ENCODE measurements at regions of chr19 and their contacts with region 1.

Region 1: GRCh38 chr19:36665832-36666231 is 805 bp downstream of the ZNF461 start:
- DNase-seq: peak in 1 of 9 experiments; percentile 8
- ATAC-seq: no peak
- H3K4me3 ChIP-seq: peak overlapping the region; percentile 62 to 63
- H3K4me3 Mint-ChIP-seq: peak overlapping the region; percentile 98
- H3K27ac ChIP-seq: peak overlapping the region; percentile 59 to 72
- H3K27ac Mint-ChIP-seq: peak overlapping the region; percentile 73
- H3K4me1 ChIP-seq: peaks cover 8% of the 10 kb centered on the region
- H3K4me1 Mint-ChIP-seq: peaks cover 35% of the 10 kb centered on the region
- H3K27me3 ChIP-seq: no peaks in the 10 kb centered on the region
- H3K27me3 Mint-ChIP-seq: no peaks in the 10 kb centered on the region
- CTCF ChIP-seq: no peak

Region 2: DNA sequence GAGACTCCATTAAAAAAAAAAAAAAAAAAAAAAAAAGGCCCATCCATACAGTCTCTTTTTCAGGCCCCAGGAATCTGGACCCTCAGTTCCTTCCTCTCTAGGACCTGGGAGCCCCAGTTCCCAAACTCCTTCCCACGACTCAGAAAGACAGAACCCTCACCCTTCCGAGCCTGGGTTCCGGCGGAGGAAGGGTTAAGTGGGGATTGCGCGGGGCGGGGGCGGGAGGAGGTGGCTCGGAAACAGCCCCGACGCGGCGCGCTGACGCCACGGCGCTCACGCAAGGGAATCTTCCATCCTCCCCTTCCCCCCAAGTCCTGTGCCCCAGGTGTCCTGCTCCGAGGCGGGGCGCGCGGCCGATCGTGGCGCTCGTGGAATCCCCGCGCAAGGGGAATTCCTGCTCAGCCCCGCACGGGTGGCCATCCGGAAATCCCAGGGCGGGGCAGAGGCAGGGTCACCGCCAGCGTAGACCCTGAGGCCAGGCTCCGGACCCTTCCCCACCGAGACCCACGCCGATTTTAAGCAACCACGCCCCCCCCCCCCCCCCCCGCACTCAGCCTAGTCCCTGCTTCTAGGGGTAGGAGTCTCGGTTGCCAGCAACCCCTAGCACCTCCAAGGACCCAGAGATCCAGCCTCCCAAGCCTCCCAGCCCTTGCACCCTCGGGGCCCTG is 766.2 kb before region 1 on chr19:
- CTCF ChIA-PET with region 1: no interaction called
- POLR2A ChIA-PET with region 1: no interaction called
- intact Hi-C with region 1: loop called in 1 of 2 experiments (anchors 5 kb)
- DNase-seq: peak; percentile 68 to 97 (median 87)
- ATAC-seq: peak; percentile 59
- H3K4me3 ChIP-seq: peak overlapping the region; percentile 95 to 97
- H3K4me3 Mint-ChIP-seq: peak overlapping the region; percentile 100
- H3K27ac ChIP-seq: peak overlapping the region; percentile 85 to 99
- H3K27ac Mint-ChIP-seq: peak overlapping the region; percentile 95
- H3K4me1 ChIP-seq: peaks cover 45% of the 10 kb centered on the region
- H3K4me1 Mint-ChIP-seq: peaks cover 57% of the 10 kb centered on the region
- H3K27me3 ChIP-seq: no peaks in the 10 kb centered on the region
- H3K27me3 Mint-ChIP-seq: no peaks in the 10 kb centered on the region
- CTCF ChIP-seq: no peak

Region 3: DNA sequence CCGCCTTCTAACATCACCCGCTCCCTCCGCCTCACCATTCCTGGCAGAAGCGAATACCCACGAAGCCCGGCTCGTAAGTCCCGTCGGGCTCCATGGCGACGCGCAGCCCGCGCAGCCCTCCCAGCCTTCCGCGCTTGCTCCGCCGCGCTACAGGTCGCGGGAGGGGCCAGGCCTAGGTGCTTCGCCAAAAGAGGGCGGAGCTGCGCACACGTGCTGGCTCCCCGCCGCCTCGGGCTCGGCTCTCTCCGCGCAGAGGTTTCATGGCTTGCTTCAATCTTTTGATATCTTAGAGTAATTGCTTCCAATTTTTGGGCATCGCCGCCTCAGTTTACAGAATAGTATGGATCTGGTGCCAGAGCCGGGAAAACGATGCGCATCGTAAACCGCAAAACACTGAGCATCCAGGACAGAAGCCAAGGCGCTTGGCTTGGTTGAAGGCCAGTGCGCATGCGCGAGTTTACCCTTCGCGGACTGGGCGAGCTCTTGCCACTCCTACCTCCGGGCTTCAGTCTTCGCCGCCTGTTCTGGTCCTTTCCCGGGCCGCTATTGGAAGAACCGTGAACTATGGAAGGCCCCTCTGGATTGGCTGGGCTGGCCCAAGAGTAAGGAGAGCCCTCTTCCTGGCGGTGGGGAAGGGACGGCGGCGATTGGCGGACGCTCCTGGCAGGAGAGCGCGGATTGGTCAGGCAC is 550.9 kb before region 1 on chr19 and contains the start of gene POLR2I:
- CTCF ChIA-PET with region 1: no interaction called
- POLR2A ChIA-PET with region 1: no interaction called
- intact Hi-C with region 1: no loop called
- DNase-seq: peak; percentile 96 to 100 (median 99)
- ATAC-seq: peak; percentile 85
- H3K4me3 ChIP-seq: peak within 1 kb of the TSS; percentile 71 to 73
- H3K4me3 Mint-ChIP-seq: peak within 1 kb of the TSS; percentile 92
- H3K27ac ChIP-seq: peak within 1 kb of the TSS; percentile 77 to 92
- H3K27ac Mint-ChIP-seq: peak within 1 kb of the TSS; percentile 97
- H3K4me1 ChIP-seq: peaks cover 18% of the 10 kb centered on the region
- H3K4me1 Mint-ChIP-seq: peaks cover 39% of the 10 kb centered on the region
- H3K27me3 ChIP-seq: no peaks in the 10 kb centered on the region
- H3K27me3 Mint-ChIP-seq: no peaks in the 10 kb centered on the region
- CTCF ChIP-seq: no peak
- total RNA-seq, gene POLR2I: 27.4 to 34.7 TPM

Region 4: GRCh38 chr19:36573020-36573885 is 92.6 kb before region 1 on chr19 and contains the start of gene ZNF529:
- CTCF ChIA-PET with region 1: no interaction called
- POLR2A ChIA-PET with region 1: no interaction called
- intact Hi-C with region 1: loop called (anchors 1 to 10 kb)
- DNase-seq: peak; percentile 75 to 98 (median 85)
- ATAC-seq: peak; percentile 93
- H3K4me3 ChIP-seq: peak within 1 kb of the TSS; percentile 87 to 99
- H3K4me3 Mint-ChIP-seq: peak within 1 kb of the TSS; percentile 87
- H3K27ac ChIP-seq: peak within 1 kb of the TSS; percentile 96 to 98
- H3K27ac Mint-ChIP-seq: peak within 1 kb of the TSS; percentile 99
- H3K4me1 ChIP-seq: peaks cover 19% of the 10 kb centered on the region
- H3K4me1 Mint-ChIP-seq: peaks cover 45% of the 10 kb centered on the region
- H3K27me3 ChIP-seq: no peaks in the 10 kb centered on the region
- H3K27me3 Mint-ChIP-seq: no peaks in the 10 kb centered on the region
- CTCF ChIP-seq: no peak
- total RNA-seq, gene ZNF529: 44.0 to 46.4 TPM

Region 5: GRCh38 chr19:36687214-36688056 is 21.6 kb after region 1 on chr19 and contains the start of gene ZNF567:
- CTCF ChIA-PET with region 1: no interaction called
- POLR2A ChIA-PET with region 1: interaction called, 3 read pairs
- intact Hi-C with region 1: loop called (anchors 1 kb)
- DNase-seq: peak; percentile 91 to 99 (median 98)
- ATAC-seq: peak; percentile 91
- H3K4me3 ChIP-seq: peak within 1 kb of the TSS; percentile 82 to 87
- H3K4me3 Mint-ChIP-seq: peak within 1 kb of the TSS; percentile 99
- H3K27ac ChIP-seq: peak within 1 kb of the TSS; percentile 71 to 81
- H3K27ac Mint-ChIP-seq: peak within 1 kb of the TSS; percentile 96
- H3K4me1 ChIP-seq: peaks cover 18% of the 10 kb centered on the region
- H3K4me1 Mint-ChIP-seq: peaks cover 35% of the 10 kb centered on the region
- H3K27me3 ChIP-seq: no peaks in the 10 kb centered on the region
- H3K27me3 Mint-ChIP-seq: no peaks in the 10 kb centered on the region
- CTCF ChIP-seq: no peak
- total RNA-seq, gene ZNF567: 10.7 to 11.1 TPM

Region 6: GRCh38 chr19:36973021-36973843 is 307.4 kb after region 1 on chr19:
- CTCF ChIA-PET with region 1: no interaction called
- POLR2A ChIA-PET with region 1: no interaction called
- intact Hi-C with region 1: loop called in 1 of 2 experiments (anchors 5 kb)
- DNase-seq: peak; percentile 49 to 92 (median 77)
- ATAC-seq: peak; percentile 90
- H3K4me3 ChIP-seq: peak overlapping the region; percentile 59 to 100
- H3K4me3 Mint-ChIP-seq: peak overlapping the region; percentile 90
- H3K27ac ChIP-seq: peak overlapping the region; percentile 53 to 66
- H3K27ac Mint-ChIP-seq: peak overlapping the region; percentile 88
- H3K4me1 ChIP-seq: peaks cover 15% of the 10 kb centered on the region
- H3K4me1 Mint-ChIP-seq: peaks cover 24% of the 10 kb centered on the region
- H3K27me3 ChIP-seq: no peaks in the 10 kb centered on the region
- H3K27me3 Mint-ChIP-seq: no peaks in the 10 kb centered on the region
- CTCF ChIP-seq: no peak